ENCODE measurements at regions of chr10 and their contacts with region 1.

Region 1: DNA sequence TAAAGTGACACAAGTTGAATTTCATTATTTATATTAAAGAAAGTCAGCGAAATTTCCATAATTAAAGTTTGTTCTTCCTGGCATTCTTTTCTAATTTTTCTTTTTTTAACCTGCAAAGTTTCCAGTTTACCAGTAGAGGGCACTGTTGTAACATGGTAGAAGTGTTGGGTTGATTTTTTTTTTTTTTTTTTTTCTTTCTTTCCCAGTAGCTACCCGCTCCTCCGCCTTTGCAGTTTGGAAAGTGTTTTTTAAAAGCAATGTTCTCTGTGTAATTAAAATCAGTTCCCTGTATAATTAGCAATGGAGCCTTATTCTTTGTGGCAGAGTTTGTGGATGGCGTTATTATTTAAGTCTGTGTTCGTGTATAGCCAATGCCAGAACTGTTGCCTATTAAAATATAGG is 53.7 kb downstream of the TAF3 start:
- DNase-seq: no peak
- H3K4me3 ChIP-seq: no peak overlapping the region
- H3K27ac ChIP-seq: no peak overlapping the region
- H3K4me1 ChIP-seq: no peaks in the 10 kb centered on the region
- H3K27me3 ChIP-seq: no peaks in the 10 kb centered on the region
- CTCF ChIP-seq: peak; percentile 18 to 77 (median 63)

Region 2: DNA sequence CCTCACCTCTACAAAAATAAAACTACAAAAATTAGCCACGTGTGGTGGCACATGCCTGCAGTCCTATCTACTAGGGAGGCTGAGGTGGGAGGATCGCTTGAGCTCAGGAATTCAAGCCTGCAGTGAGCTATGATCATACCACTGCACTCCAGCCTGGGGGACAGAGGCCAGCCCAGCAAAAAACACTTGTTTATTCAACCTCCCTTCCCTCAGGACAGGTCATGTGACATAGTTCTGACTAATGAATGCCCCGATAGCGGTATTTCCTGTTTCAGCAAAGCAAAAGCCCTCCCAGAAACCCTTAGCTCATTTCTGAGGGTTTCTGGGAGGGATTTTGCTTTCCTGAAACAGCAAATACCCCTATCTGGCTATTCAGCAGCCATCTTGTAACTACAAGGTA is 339.6 kb after region 1 on chr10:
- intact Hi-C with region 1: no loop called
- DNase-seq: no peak
- H3K4me3 ChIP-seq: no peak overlapping the region
- H3K27ac ChIP-seq: no peak overlapping the region
- H3K4me1 ChIP-seq: no peaks in the 10 kb centered on the region
- H3K27me3 ChIP-seq: no peaks in the 10 kb centered on the region
- CTCF ChIP-seq: no peak

Region 3: DNA sequence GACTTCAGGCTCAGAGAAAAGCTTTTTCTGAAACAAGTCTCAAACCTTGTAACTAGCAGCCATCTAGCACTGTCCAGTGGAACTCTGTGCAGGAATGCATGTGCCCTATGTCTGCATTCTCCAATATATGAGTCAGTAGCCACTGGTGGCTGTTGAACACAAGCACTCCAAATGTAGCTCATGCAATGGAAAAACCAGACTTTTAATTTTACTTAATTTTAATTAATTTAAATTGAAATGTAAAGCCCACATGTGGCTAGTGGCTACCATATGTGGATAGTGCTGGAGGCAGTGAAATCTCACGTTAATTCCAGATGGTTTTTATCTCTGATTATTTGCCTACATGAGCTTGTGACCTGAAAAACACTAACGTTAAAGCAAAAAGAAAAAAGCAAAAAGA is 407.6 kb after region 1 on chr10:
- intact Hi-C with region 1: no loop called
- DNase-seq: no peak
- H3K4me3 ChIP-seq: no peak overlapping the region
- H3K27ac ChIP-seq: no peak overlapping the region
- H3K4me1 ChIP-seq: no peaks in the 10 kb centered on the region
- H3K27me3 ChIP-seq: no peaks in the 10 kb centered on the region
- CTCF ChIP-seq: no peak

Region 4: DNA sequence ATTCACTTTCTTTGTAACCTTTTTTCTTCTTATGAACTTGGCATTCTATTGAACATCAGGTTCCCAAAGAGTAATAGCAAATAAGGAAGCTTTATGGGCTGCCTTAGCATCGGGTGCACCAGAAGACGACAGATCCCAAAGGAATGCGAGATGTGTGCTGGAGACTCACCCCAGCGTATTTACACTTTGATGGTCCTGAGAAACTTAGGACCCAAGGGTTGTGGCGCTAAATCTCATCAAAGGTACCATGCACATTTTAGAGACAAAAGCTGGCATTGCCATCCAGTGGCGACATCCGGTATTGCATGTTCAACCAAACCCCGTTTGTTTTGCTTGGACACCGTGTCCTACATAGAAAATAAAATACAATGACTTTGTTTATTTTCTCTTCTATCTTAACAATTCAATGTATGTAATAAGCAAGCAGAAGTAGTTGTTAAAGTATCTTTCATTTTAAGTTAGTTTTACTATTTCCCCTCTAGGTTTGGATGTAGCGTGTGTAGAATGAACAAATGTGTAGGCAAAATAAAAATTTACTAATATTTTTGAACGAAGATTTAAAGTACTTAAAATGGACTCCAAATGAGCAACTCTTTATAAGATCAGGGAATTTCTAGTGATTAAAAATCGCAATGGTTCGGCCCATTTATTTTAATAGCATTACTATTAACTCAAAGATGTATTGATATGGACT is 1337.2 kb after region 1 on chr10:
- intact Hi-C with region 1: loop called (anchors 5 kb)
- DNase-seq: peak in 1 of 2 donors; percentile 71
- H3K4me3 ChIP-seq: no peak overlapping the region
- H3K27ac ChIP-seq: no peak overlapping the region
- H3K4me1 ChIP-seq: no peaks in the 10 kb centered on the region
- H3K27me3 ChIP-seq: no peaks in the 10 kb centered on the region
- CTCF ChIP-seq: peak; percentile 49 to 76 (median 74)

Region 5: GRCh38 chr10:9302120-9302746 is 1430.2 kb after region 1 on chr10:
- intact Hi-C with region 1: loop called (anchors 10 kb)
- DNase-seq: no peak
- H3K4me3 ChIP-seq: no peak overlapping the region
- H3K27ac ChIP-seq: no peak overlapping the region
- H3K4me1 ChIP-seq: no peaks in the 10 kb centered on the region
- H3K27me3 ChIP-seq: no peaks in the 10 kb centered on the region
- CTCF ChIP-seq: peak in 1 of 3 experiments; percentile 20

Measured in ascending aorta (tissue), 2 donors.